Head of caudate nucleus (tissue), 42 donors: ENCODE measurements at regions of chr18 and their contacts with region 1.

Region 1: DNA sequence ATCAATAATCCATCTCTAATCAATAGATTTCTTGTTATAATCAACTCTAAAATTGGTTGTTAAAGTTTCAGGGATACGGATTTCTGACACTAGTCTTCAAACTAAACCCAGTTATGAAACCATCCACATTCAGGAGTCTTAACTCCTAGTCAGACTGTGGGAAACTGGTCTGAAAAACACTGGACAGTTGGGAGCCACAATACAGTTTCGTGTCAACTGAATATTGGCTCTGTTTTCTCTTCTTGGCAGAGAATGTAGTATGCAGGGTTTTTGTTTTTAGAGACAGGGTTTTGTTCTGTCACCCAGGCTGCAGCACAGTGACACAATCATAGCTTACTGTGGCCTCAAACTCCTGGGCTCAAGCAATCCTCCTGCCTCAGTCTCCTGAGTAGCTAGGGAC is 123.1 kb downstream of the RTTN start:
- DNase-seq: no peak

Region 2: GRCh38 chr18:68847219-68847837 is 1235.1 kb before region 1 on chr18:
- intact Hi-C with region 1: loop called (anchors 10 kb)
- DNase-seq: no peak

Region 3: DNA sequence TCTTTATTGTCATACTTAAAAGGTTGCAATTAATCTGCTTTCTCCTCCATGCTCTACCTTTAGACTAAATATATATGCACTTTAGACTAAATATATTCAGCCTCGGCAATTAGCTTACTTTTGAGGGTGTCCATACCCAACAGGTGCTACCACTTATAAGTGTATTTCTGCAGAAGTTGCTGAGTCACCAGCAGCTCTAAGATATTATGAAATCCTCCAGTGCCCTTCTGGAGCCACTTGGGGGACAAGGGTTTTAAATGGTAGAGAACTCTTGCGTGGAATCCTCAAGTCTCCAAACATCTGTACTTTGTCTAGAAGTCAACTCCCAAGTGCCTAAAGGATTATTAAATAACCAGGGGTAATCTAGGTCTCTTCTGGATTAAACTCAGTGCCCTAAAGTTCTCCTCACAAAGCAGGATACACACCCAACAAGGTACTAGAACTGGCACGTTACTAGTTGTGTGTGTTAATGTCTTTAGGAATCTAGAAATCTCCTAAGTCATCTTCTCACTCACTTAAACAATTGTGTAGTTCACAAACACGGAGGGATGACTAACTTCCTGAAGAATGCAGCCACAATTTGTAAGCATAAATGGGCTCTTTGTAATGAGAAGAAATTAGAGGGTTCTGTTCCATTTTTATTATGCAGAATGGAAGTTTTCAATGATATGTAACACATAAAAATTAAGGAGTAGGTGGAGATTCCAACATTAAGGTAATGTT is 294.4 kb before region 1 on chr18:
- intact Hi-C with region 1: no loop called
- DNase-seq: no peak

Region 4: DNA sequence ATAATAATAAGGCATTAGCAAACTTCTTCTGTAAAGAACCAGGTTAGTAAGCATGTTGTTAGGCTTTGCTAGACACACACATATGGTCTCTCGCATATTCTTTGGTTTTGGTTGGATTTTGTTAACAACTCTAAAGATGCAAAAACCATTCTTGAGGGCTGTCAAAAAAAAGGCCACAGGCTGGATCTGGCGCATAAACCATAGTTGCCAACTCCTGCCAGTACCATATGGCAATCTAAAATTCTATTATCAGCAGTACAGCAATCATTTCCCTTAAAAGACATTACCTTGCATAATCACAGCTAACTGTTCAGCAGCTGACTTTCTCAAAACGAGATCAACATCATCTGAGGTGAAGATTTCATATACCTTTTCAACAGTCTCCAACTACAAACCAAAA is 59.6 kb after region 1 on chr18:
- intact Hi-C with region 1: no loop called
- DNase-seq: peak in 1 of 42 donors; percentile 7